Esophagus muscularis mucosa (tissue), 4 donors: ENCODE measurements at regions of chr1 and their contacts with region 1.

Region 1: DNA sequence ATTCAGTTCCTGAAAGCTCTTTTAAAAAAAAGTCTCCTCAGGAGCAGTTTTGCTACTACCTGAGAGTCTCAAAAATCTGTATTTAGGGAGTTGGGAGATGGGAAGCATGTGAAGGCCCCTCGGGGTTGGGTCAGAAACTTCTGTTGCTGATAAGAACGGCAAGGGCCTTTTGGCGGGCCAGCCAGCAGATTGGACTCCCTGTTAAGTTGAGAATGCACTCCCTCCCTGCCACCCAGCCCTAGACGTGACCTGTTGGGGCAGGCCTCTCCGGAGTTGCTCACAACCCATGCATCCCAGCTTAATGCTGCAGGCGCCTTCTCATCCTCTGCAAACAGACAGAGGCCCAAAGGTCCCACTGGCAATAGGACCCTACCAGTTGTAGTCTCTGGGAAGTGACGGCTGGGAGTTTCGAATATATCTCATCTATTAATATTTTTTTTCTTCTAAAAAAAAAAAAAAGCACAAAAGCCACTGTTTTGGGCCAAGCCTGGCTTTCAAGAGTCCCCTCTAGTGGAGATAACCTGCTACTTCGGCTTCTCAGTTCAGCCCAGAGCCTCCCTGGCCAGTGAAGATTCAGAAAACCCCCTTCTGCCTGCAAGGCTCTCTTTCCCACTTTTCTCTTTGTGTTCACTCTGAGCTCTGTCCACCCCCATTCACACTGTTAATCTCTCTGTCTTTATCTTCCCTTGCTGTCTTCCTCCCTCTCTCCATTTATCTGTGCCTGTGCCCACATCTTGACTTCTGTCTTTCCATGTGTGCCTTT is 5.3 kb downstream of the PLXNA2 start:
- DNase-seq: no peak
- H3K4me3 ChIP-seq: no peak overlapping the region
- H3K27ac ChIP-seq: peak overlapping the region; percentile 53 to 94 (median 76)
- H3K4me1 ChIP-seq: peaks cover 55 to 93% (median 92%) of the 10 kb centered on the region in 4 donors
- H3K27me3 ChIP-seq: no peaks in the 10 kb centered on the region
- CTCF ChIP-seq: peak; percentile 73 to 87 (median 81)
- EP300 ChIP-seq: no peak
- POLR2A ChIP-seq: no peak

Region 2: DNA sequence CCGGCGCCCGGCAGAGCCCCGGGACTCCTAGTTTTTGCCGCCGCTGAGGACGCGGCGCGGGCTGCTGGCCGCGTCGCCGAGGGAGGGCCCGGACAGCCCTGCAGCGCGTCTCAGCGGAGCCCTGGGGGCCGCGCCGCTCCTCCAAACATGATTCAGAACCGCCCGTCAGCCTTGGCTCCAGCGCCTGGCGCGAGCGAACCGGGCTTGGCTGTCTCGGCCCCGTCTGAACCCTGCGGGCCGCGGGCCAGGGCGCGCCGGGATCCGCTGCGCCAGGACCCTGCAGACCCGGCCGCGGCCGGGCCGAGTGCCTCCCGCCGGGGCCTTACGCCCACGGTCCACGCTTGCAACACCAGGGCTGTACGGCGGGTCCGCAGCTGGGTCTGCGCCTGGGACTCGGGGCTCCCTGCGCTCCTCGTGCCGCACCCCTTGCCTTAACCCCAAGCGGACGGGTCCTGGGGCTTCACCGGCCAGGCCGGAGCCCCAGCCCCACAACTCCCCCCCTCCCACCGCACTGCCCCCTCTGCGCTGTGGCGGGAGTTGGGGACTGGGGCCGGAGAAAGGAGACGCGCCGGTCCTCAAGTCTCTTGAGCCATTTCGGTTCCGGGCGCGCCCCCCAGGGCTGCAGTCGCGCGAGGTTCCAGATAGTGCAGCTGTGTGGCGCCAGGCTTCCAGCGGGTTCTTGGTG is 279.6 kb before region 1 on chr1:
- intact Hi-C with region 1: no loop called
- DNase-seq: no peak
- H3K4me3 ChIP-seq: peak overlapping the region; percentile 50 to 65 (median 60)
- H3K27ac ChIP-seq: peak overlapping the region; percentile 83 to 93 (median 89)
- H3K4me1 ChIP-seq: peaks cover 37 to 56% (median 46%) of the 10 kb centered on the region in 4 donors
- H3K27me3 ChIP-seq: no peaks in the 10 kb centered on the region
- CTCF ChIP-seq: peak in 1 of 3 experiments; percentile 21
- EP300 ChIP-seq: no peak
- POLR2A ChIP-seq: no peak

Region 3: DNA sequence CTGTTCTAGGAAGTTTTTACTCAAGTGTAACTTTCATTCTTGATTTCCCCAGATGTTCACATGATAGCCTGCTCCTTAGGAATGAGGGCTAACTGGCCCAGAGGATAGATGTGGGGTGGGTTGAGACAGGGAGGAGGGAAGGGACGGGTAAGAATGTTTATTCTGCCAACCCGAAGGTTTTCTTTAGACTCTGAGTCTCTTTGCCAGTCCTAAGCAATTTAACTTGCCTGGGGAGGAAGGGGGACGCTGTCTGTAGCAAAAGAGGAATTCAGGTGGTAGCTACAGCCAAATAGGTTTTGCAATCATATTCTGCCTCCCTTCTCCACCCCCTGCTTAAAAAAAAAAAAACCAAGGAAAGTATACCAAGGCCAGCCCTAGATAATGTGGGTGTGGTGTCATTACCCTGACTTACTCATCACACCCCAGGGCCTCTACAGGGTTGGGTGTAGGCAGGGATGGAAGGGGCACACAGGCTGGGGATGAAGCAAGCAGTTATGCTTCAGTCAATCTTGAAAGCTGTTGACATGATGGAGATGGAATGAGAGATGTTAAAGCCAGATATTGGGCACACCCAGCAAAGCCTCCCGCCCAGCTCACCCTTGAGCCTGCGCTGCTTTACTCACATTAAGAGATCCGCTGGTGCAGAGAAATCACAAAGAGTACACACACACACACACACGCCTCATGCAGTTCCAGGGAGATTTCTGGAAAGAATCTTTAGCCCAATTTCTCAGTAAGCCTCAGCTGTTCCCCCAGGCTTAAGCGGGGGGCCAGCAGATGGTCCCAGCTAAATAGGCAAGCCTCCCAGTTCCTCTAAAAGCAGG is 54.6 kb before region 1 on chr1:
- intact Hi-C with region 1: loop called (anchors 5 kb)
- DNase-seq: no peak
- H3K4me3 ChIP-seq: peak overlapping the region in 1 of 4 donors; percentile 9
- H3K27ac ChIP-seq: peak overlapping the region; percentile 82 to 83 (median 82)
- H3K4me1 ChIP-seq: peaks cover 65 to 84% (median 75%) of the 10 kb centered on the region in 4 donors
- H3K27me3 ChIP-seq: no peaks in the 10 kb centered on the region
- CTCF ChIP-seq: no peak
- EP300 ChIP-seq: no peak
- POLR2A ChIP-seq: no peak